ENCODE measurements at regions of chr5 and their contacts with region 1.

Region 1: DNA sequence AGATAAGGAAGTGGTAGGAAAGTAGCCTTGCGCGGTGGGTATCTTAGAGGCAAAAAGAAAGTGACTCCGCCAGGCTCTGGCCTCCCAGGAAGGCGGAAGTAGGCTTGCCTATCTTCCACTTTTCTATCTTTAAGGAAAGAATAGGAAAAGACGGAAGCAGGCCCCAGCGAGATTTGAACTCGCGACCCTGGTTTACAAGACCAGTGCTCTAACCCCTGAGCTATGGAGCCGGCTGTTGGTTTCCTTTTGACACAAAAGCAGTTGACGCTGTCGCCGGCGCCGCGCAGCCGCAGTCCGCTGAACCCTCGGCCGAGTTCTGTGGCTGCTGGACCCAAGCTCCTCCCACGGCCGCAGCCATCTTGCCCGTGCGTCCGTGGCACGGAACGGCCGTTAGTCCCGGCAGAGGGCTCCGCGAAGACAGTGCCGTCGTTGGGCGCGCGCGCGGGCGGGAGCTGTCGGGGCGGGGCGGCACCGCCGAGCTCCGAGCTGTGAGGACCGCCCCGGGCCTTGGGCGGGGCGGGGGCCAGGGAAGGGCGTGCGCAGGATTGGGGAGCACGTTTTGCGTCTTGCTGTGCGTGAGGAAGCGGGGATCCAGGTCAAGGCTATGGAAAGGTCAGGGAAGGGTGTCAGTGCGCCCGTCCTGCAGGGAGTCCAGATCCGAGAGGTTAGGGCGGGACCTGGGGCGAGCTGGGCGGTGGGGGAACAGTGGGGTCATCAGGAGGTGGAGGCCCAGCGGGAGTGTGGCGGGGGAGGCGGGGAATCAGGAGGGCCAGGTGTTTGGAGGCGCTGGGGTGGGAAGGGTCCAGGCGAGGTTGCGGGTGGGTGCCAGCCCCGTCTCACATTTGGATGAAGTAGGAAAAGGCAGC is 13.2 kb downstream of the TRIM7 start:
- DNase-seq: peak; percentile 98
- ATAC-seq: peak; percentile 68
- H3K4me3 ChIP-seq: peak overlapping the region; percentile 86 to 98 (median 93)
- H3K4me3 Mint-ChIP-seq: peak overlapping the region; percentile 97
- H3K27ac ChIP-seq: peak overlapping the region; percentile 62 to 82
- H3K27ac Mint-ChIP-seq: peak overlapping the region; percentile 97
- H3K4me1 ChIP-seq: peaks cover 7 to 28% of the 10 kb centered on the region in 2 donors
- H3K4me1 Mint-ChIP-seq: peaks cover 40% of the 10 kb centered on the region
- H3K27me3 ChIP-seq: no peaks in the 10 kb centered on the region
- H3K27me3 Mint-ChIP-seq: peaks cover 10% of the 10 kb centered on the region
- CTCF ChIP-seq: no peak

Region 2: GRCh38 chr5:180775624-180776023 is 416.1 kb before region 1 on chr5:
- CTCF ChIA-PET with region 1: no interaction called
- POLR2A ChIA-PET with region 1: no interaction called
- intact Hi-C with region 1: no loop called
- DNase-seq: no peak
- ATAC-seq: no peak
- H3K4me3 ChIP-seq: no peak overlapping the region
- H3K4me3 Mint-ChIP-seq: no peak overlapping the region
- H3K27ac ChIP-seq: no peak overlapping the region
- H3K27ac Mint-ChIP-seq: no peak overlapping the region
- H3K4me1 ChIP-seq: no peaks in the 10 kb centered on the region
- H3K4me1 Mint-ChIP-seq: no peaks in the 10 kb centered on the region
- H3K27me3 ChIP-seq: peaks cover 0 to 4% (median 0%) of the 10 kb centered on the region in 4 experiments
- H3K27me3 Mint-ChIP-seq: peaks cover 17% of the 10 kb centered on the region
- CTCF ChIP-seq: no peak

Region 3: GRCh38 chr5:181138258-181138657 is 53.5 kb before region 1 on chr5:
- CTCF ChIA-PET with region 1: no interaction called
- POLR2A ChIA-PET with region 1: no interaction called
- intact Hi-C with region 1: no loop called
- DNase-seq: no peak
- ATAC-seq: no peak
- H3K4me3 ChIP-seq: no peak overlapping the region
- H3K4me3 Mint-ChIP-seq: no peak overlapping the region
- H3K27ac ChIP-seq: no peak overlapping the region
- H3K27ac Mint-ChIP-seq: no peak overlapping the region
- H3K4me1 ChIP-seq: no peaks in the 10 kb centered on the region
- H3K4me1 Mint-ChIP-seq: no peaks in the 10 kb centered on the region
- H3K27me3 ChIP-seq: peaks cover 0 to 10% (median 0%) of the 10 kb centered on the region in 4 experiments
- H3K27me3 Mint-ChIP-seq: peaks cover 28% of the 10 kb centered on the region
- CTCF ChIP-seq: no peak

Region 4: GRCh38 chr5:181173420-181174342 is 18.1 kb before region 1 on chr5:
- CTCF ChIA-PET with region 1: interaction called, 11 read pairs
- POLR2A ChIA-PET with region 1: interaction called, 6 read pairs
- intact Hi-C with region 1: loop called (anchors 2 kb)
- DNase-seq: peak; percentile 79
- ATAC-seq: peak; percentile 69
- H3K4me3 ChIP-seq: peak overlapping the region in 4 of 5 experiments; percentile 18 to 52 (median 34)
- H3K4me3 Mint-ChIP-seq: peak overlapping the region; percentile 85
- H3K27ac ChIP-seq: no peak overlapping the region
- H3K27ac Mint-ChIP-seq: peak overlapping the region; percentile 86
- H3K4me1 ChIP-seq: peaks cover 27 to 29% of the 10 kb centered on the region in 2 donors
- H3K4me1 Mint-ChIP-seq: peaks cover 29% of the 10 kb centered on the region
- H3K27me3 ChIP-seq: peaks cover 0 to 54% (median 16%) of the 10 kb centered on the region in 4 experiments
- H3K27me3 Mint-ChIP-seq: peaks cover 28% of the 10 kb centered on the region
- CTCF ChIP-seq: peak; percentile 2

Region 5: GRCh38 chr5:181217111-181217802 is 25.5 kb after region 1 on chr5:
- CTCF ChIA-PET with region 1: interaction called, 48 read pairs
- POLR2A ChIA-PET with region 1: interaction called, 74 read pairs
- intact Hi-C with region 1: loop called (anchors 1 kb)
- DNase-seq: peak; percentile 83
- ATAC-seq: peak; percentile 32
- H3K4me3 ChIP-seq: peak overlapping the region; percentile 53 to 86 (median 71)
- H3K4me3 Mint-ChIP-seq: peak overlapping the region; percentile 99
- H3K27ac ChIP-seq: peak overlapping the region; percentile 31 to 57
- H3K27ac Mint-ChIP-seq: peak overlapping the region; percentile 94
- H3K4me1 ChIP-seq: peaks cover 9 to 32% of the 10 kb centered on the region in 2 donors
- H3K4me1 Mint-ChIP-seq: peaks cover 40% of the 10 kb centered on the region
- H3K27me3 ChIP-seq: no peaks in the 10 kb centered on the region
- H3K27me3 Mint-ChIP-seq: no peaks in the 10 kb centered on the region
- CTCF ChIP-seq: no peak

Region 6: DNA sequence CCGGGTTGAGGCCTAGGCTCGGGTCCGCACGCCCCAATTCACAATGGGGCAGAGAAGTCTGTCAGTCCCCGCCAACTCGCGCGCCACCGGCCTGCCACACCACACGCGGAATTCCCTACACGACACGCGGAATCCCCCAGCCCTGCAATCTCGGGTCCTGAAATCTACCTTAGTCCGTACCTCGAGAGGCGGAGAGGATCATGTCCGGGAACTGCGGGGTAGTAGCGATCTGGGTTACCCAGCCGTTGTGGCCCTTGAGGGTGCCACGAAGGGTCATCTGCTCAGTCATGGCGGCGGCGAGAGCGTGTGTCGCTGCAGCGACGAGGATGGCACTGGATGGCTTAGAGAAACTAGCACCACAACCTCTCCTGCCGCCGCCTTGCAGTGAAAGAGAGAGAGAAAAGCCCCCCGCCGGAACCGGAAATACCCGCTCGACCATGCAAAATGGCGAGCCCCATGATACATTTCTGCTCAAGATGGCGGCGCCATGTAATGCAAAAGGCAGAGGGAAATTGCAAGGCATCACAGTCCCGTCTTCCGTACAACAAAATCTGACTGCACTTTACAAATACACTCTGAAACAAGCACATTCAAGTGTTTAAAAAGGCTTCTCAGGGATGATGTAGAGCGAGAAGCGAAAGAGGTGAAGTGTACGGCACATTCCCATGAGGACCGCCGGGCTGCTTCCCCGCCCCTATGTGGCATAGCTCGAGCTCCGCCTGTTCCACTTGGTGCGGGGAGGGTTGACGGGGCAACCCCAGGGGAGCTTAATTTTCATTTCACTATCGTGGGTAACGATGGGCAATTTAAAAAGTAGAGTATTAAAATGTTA is 52.0 kb after region 1 on chr5 and contains the start of gene RACK1:
- CTCF ChIA-PET with region 1: interaction called, 8 read pairs
- POLR2A ChIA-PET with region 1: interaction called, 15 read pairs
- intact Hi-C with region 1: loop called (anchors 1 kb)
- DNase-seq: peak; percentile 96
- ATAC-seq: peak; percentile 75
- H3K4me3 ChIP-seq: peak within 1 kb of the TSS; percentile 70 to 99 (median 98)
- H3K4me3 Mint-ChIP-seq: peak within 1 kb of the TSS; percentile 99
- H3K27ac ChIP-seq: peak within 1 kb of the TSS; percentile 91 to 92
- H3K27ac Mint-ChIP-seq: peak within 1 kb of the TSS; percentile 96
- H3K4me1 ChIP-seq: peaks cover 44 to 58% of the 10 kb centered on the region in 2 donors
- H3K4me1 Mint-ChIP-seq: peaks cover 66% of the 10 kb centered on the region
- H3K27me3 ChIP-seq: no peaks in the 10 kb centered on the region
- H3K27me3 Mint-ChIP-seq: no peaks in the 10 kb centered on the region
- CTCF ChIP-seq: no peak
- total RNA-seq, gene RACK1: 1,928 and 2,047 TPM in 2 replicates

Measured in B cell (primary cell).